Activated CD8-positive, alpha-beta T cell treated with anti-CD3 and anti-CD28 coated beads for 36 hours (primary cell): ENCODE measurements at regions of chr2 and their contacts with region 1.

Region 1: DNA sequence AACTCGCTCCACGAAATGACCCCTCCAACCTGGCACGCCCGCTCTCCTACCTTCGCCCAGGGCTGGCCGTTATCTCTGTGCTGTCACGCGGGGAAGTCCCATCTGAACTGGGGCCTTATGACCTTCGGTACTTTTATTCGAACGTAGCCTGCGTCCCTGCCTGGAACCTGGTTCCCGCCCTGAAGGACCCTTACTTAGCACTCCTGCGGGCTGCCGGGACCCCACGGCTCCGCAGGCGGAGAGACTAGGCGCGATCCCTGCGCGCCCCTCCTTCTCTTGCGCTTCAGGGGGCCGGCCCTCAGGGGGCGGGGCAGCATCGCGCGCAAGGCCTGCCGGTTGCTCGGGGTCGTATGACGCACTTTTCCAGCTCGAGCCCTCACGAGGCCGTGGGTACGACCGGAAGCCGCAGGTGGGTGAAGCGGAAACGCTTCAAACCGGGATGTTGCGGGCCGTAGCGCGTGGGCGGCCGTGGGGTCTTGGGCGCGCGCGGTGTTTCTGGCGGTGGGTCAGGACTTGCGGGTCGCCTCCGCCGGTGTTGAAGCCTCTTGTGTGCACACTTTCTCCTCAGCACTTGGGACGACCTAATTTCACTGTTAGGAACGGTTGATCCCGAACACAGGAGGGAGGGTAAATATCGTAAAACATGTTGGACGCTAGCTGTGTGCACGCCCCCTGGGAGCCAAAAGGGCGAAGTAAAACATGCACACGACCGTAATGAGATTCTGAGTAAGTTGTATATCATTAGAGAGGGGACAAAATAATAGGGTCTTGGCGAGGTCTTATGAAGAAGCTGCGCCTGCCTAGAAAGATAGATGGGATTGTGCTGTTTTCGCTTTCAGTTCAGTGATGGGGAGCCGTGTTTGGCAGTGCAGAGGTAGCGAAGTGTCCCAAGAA is at the starts of genes LIPT1 and TSGA10:
- DNase-seq: peak; percentile 96
- ATAC-seq: peak; percentile 97
- H3K4me3 Mint-ChIP-seq: no peak within 1 kb of the TSS
- H3K27ac Mint-ChIP-seq: peak within 1 kb of the TSS; percentile 86
- H3K4me1 Mint-ChIP-seq: peaks cover 42% of the 10 kb centered on the region
- H3K27me3 Mint-ChIP-seq: no peaks in the 10 kb centered on the region
- CTCF ChIP-seq: no peak
- total RNA-seq, gene LIPT1: 3.3 to 6.0 TPM
- total RNA-seq, gene TSGA10: 8.6 to 9.2 TPM

Region 2: DNA sequence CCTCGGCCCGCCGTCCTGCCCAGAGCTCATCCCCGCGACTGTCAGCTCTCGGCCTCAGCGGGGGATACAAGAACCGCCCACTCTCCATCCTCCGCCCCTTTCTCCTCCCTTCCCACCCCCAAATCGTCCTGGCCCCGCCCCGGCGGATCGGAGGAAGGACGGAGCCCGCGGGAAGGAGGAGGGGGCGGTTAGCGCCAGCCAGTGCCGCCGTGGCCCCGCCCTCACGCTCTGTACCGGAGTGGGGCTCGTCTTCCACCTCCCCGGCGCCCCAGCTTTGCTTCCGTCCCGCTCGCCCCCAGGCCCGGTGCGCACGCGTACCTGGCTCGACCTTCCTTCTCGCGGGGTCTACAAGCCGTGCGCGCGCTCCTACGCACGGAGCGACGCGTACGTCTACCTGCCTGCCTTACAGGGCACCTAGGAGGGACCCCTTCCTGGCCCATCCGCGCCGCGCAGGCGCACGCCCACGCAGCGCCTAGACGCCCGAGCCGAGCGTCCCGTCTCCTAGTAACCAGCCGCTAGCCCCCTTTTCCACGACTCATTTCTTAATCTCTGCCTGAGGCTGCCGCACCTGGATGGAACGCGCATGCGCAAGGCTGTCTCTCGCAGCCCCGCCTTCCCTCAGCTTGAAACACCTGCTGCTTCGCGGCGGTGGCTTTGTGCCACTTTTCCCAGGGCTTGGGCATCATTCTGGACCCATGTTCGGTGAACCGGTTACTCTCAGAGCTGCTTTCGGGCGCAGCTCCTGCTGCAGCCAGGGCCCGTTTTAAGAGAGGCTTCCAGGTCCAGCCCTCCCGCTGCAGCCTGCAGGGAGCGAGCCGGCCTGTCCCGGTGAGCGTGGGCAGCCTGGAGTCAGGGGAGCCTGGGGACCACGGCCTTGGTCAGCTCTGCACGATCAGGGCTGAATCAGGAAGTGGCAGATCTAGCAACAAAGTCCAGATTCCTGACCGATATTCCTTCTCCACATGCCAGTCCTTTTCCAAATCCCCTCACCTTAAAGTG is 13.5 kb before region 1 on chr2 and contains the start of gene C2orf15:
- CTCF ChIA-PET with region 1: interaction called, 9 read pairs
- POLR2A ChIA-PET with region 1: interaction called, 16 read pairs
- intact Hi-C with region 1: no loop called
- DNase-seq: peak; percentile 98
- ATAC-seq: peak; percentile 93
- H3K4me3 Mint-ChIP-seq: peak within 1 kb of the TSS; percentile 94
- H3K27ac Mint-ChIP-seq: peak within 1 kb of the TSS; percentile 86
- H3K4me1 Mint-ChIP-seq: peaks cover 16% of the 10 kb centered on the region
- H3K27me3 Mint-ChIP-seq: no peaks in the 10 kb centered on the region
- CTCF ChIP-seq: no peak
- total RNA-seq, gene C2orf15: 1.4 to 1.5 TPM

Region 3: DNA sequence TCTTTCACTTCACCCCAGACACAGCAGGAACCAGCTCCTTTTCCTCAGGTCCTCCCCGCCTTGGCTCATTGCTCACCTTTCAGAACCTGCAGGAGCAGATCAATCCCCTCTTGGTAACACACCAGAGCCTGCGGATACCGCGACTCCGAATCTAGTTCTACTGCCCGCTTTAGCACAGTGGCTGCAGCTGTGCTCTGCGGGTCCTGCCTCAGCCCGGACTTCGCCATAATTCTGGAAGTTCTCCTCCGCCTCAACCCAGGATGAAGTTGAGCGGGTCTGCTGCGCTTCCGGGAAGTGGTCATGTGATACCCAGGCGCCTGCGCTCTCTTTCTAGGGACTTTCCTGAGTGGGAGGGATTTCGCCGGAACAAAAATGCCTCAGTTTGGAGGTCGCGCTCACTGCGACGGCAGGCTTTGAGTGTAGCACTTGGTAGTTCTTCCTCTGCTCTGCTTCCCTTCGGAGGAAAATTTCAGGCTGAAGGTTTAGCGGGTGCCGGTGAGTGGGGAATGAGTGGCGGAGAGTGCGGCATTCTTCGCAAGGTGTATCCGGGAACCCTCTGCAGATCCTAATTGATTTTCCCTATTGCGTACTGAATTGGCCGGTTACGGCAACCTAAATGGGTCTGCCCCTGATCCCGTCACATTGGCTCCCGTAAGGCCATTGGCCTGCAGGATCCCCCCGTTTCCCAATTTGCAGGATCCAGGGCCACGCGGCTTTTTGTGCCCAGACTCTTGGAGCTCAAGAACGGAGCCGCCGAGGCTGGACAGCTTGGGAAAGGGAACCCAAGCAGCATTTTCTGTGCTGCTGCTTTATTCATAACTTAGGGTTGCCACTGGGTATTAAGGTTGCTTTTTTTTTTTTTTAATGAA is 26.1 kb after region 1 on chr2 and contains the starts of genes MITD1 and MRPL30:
- CTCF ChIA-PET with region 1: interaction called, 8 read pairs
- POLR2A ChIA-PET with region 1: interaction called, 10 read pairs
- intact Hi-C with region 1: no loop called
- DNase-seq: peak; percentile 91
- ATAC-seq: peak; percentile 95
- H3K4me3 Mint-ChIP-seq: peak within 1 kb of the TSS; percentile 98
- H3K27ac Mint-ChIP-seq: peak within 1 kb of the TSS; percentile 97
- H3K4me1 Mint-ChIP-seq: peaks cover 48% of the 10 kb centered on the region
- H3K27me3 Mint-ChIP-seq: no peaks in the 10 kb centered on the region
- CTCF ChIP-seq: no peak
- total RNA-seq, gene MITD1: 49.8 to 55.9 TPM
- total RNA-seq, gene MRPL30: 30.0 to 34.2 TPM